ENCODE measurements at regions of chr6 and their contacts with region 1.

Region 1: DNA sequence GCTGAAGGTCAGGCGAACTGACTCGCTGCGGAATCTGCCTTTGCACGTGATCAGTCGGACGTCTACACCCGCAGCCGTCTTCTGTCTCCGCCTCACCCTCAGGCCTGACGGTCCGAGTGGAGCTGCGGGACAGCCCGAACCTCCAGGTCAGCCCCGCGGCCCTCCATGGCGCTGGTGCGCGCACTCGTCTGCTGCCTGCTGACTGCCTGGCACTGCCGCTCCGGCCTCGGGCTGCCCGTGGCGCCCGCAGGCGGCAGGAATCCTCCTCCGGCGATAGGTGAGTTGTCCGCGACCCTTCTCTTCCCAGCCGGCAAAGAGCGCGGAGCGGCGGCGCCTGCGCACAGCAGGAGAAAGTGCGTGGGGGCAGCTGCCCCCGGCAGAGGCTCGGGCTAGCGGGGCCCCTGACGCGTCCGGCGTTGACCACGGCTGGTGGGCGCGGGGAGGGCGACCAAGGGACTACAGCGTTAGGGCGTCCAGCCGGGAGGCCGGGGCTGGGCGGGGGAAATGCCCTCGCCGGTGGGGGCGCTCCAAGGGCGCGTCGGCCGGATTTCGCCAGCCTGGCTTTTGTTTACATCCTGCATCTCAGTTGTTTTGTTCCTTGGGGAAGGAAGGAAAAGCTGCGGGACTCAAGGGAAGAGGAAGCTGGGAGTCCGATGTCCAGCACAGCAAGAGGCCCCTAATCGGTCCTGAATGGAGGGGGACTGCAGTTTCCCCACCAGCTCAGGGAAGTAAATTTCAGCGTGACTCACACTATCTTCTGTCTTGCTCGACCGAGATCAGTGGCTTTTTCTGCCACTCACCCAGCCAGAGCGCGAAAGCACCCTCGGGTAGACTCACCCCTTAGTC is at the start of gene SMPDL3A:
- DNase-seq: peak; percentile 84
- total RNA-seq, gene SMPDL3A: 0.07 and 1.2 TPM in 2 replicates

Region 2: GRCh38 chr6:122839477-122839876 is 50.1 kb after region 1 on chr6:
- in situ Hi-C with region 1: loop called (anchors 5 kb)
- DNase-seq: peak; percentile 88